ENCODE measurements at regions of chr15 and their contacts with region 1.

Region 1: GRCh38 chr15:89171136-89172072 is 50.0 kb downstream of the RLBP1 start:
- DNase-seq: peak; percentile 49
- ATAC-seq: no peak
- H3K4me3 Mint-ChIP-seq: no peak overlapping the region
- H3K27ac Mint-ChIP-seq: no peak overlapping the region
- H3K4me1 Mint-ChIP-seq: peaks cover 29% of the 10 kb centered on the region
- H3K27me3 Mint-ChIP-seq: no peaks in the 10 kb centered on the region
- CTCF ChIP-seq: peak; percentile 80

Region 2: GRCh38 chr15:88874684-88875083 is 296.7 kb before region 1 on chr15:
- CTCF ChIA-PET with region 1: no interaction called
- POLR2A ChIA-PET with region 1: no interaction called
- intact Hi-C with region 1: no loop called
- DNase-seq: no peak
- ATAC-seq: no peak
- H3K4me3 Mint-ChIP-seq: no peak overlapping the region
- H3K27ac Mint-ChIP-seq: no peak overlapping the region
- H3K4me1 Mint-ChIP-seq: no peaks in the 10 kb centered on the region
- H3K27me3 Mint-ChIP-seq: no peaks in the 10 kb centered on the region
- CTCF ChIP-seq: no peak

Region 3: DNA sequence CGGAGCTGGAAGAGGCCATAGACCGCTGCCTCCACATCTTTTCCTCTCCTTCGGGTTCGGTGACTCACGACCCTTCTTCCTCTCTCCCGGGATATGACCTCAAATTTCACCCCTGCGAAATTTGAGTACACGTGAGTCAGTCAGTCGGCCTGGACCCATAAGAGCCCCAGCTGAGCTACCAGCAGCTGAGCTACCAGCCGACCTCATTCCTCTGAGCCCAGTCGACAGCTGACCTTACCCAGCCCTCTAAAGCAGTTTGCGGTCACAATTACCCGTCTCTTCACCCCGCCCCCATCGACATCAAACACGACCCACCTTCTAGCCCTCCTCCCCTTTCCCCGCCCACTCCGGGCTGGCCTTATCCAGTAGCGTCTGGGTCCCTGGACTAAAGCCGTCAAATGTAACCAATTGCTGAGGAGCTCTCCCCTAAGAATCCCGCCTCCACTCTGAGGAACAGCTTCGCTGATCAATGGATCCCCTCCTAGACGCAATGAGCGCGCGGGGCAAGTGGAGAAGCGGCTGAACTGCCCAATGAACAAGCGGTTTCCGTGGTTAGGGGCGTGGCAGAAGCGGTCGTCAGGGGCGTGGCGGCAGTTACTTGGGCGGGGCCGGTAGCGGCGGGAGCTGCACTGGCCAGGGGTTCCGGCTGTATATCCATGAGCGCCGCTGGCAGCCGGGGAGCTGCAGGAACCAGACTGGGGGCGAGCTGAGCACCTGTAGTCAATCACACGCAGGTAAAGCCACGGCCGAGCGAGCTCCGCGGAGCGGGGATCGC is 83.4 kb before region 1 on chr15 and contains the start of gene ABHD2:
- CTCF ChIA-PET with region 1: interaction called, 9 read pairs
- POLR2A ChIA-PET with region 1: interaction called, 16 read pairs
- intact Hi-C with region 1: loop called (anchors 10 kb)
- DNase-seq: peak; percentile 99
- ATAC-seq: peak; percentile 98
- H3K4me3 Mint-ChIP-seq: no peak within 1 kb of the TSS
- H3K27ac Mint-ChIP-seq: peak within 1 kb of the TSS; percentile 18
- H3K4me1 Mint-ChIP-seq: peaks cover 36% of the 10 kb centered on the region
- H3K27me3 Mint-ChIP-seq: no peaks in the 10 kb centered on the region
- CTCF ChIP-seq: no peak
- total RNA-seq, gene ABHD2: 36.8 to 38.9 TPM

Region 4: GRCh38 chr15:89150762-89151664 is 20.4 kb before region 1 on chr15:
- CTCF ChIA-PET with region 1: interaction called, 30 read pairs
- POLR2A ChIA-PET with region 1: interaction called, 10 read pairs
- intact Hi-C with region 1: no loop called
- DNase-seq: no peak
- ATAC-seq: no peak
- H3K4me3 Mint-ChIP-seq: no peak overlapping the region
- H3K27ac Mint-ChIP-seq: no peak overlapping the region
- H3K4me1 Mint-ChIP-seq: peaks cover 3% of the 10 kb centered on the region
- H3K27me3 Mint-ChIP-seq: no peaks in the 10 kb centered on the region
- CTCF ChIP-seq: no peak

Region 5: GRCh38 chr15:89197503-89197971 is 26.1 kb after region 1 on chr15:
- CTCF ChIA-PET with region 1: interaction called, 16 read pairs
- POLR2A ChIA-PET with region 1: no interaction called
- intact Hi-C with region 1: no loop called
- DNase-seq: peak; percentile 30
- ATAC-seq: peak; percentile 90
- H3K4me3 Mint-ChIP-seq: no peak overlapping the region
- H3K27ac Mint-ChIP-seq: peak overlapping the region; percentile 80
- H3K4me1 Mint-ChIP-seq: peaks cover 11% of the 10 kb centered on the region
- H3K27me3 Mint-ChIP-seq: no peaks in the 10 kb centered on the region
- CTCF ChIP-seq: no peak